K562 (cell line): ENCODE measurements at regions of chr5 and their contacts with region 1.

Region 1: GRCh38 chr5:138028971-138029365 is 3.9 kb downstream of the FAM13B start:
- DNase-seq: no peak
- ATAC-seq: no peak
- H3K4me3 ChIP-seq: no peak overlapping the region
- H3K27ac ChIP-seq: no peak overlapping the region
- H3K4me1 ChIP-seq: peaks cover 16 to 20% of the 10 kb centered on the region in 2 experiments; a peak in 4 of 5 replicates
- H3K27me3 ChIP-seq: no peaks in the 10 kb centered on the region
- CTCF ChIP-seq: no peak
- EP300 ChIP-seq: no peak
- POLR2A ChIP-seq: no peak
- RAD21 ChIP-seq: no peak

Region 2: GRCh38 chr5:138018844-138019243 is 10.1 kb before region 1 on chr5:
- CTCF ChIA-PET with region 1: no interaction called
- POLR2A ChIA-PET with region 1: interaction called, 11 read pairs
- in situ Hi-C with region 1: no loop called
- intact Hi-C with region 1: no loop called
- DNase-seq: no peak
- ATAC-seq: no peak
- H3K4me3 ChIP-seq: no peak overlapping the region
- H3K27ac ChIP-seq: no peak overlapping the region
- H3K4me1 ChIP-seq: 0 out of 5 replicates have a peak, but pooled peaks cover 0 to under 1% of the 10 kb centered on the region in 2 experiments
- H3K27me3 ChIP-seq: no peaks in the 10 kb centered on the region
- CTCF ChIP-seq: no peak
- EP300 ChIP-seq: no peak
- POLR2A ChIP-seq: no peak
- RAD21 ChIP-seq: no peak

Region 3: DNA sequence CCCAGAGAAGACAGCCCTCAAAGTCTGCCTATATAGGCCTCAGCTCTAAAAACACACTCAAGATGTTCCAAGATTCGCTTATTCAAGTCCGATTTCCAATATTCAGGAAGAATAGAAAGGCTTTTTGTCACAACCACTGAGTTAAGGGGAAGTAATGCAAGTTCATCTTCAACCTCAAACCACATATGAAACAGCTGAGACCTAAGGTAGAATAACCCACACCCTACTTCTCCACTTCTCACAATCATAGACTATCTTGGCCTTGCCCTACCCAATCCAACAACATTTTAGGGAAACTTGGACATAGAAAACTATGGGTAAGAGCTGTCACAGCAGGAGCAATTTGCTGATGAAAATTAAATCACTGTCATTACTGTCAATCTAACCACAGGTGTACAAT is 998.2 kb after region 1 on chr5:
- CTCF ChIA-PET with region 1: no interaction called
- POLR2A ChIA-PET with region 1: no interaction called
- in situ Hi-C with region 1: no loop called
- intact Hi-C with region 1: no loop called
- DNase-seq: no peak
- ATAC-seq: no peak
- H3K4me3 ChIP-seq: no peak overlapping the region
- H3K27ac ChIP-seq: no peak overlapping the region
- H3K4me1 ChIP-seq: 0 out of 5 replicates have a peak, but pooled peaks cover 0 to 4% of the 10 kb centered on the region in 2 experiments
- H3K27me3 ChIP-seq: no peaks in the 10 kb centered on the region
- CTCF ChIP-seq: no peak
- EP300 ChIP-seq: no peak
- POLR2A ChIP-seq: no peak
- RAD21 ChIP-seq: no peak